Activated CD4-positive, alpha-beta T cell treated with anti-CD3 and anti-CD28 coated beads, Interleukin-2, amount 10 ng/mL, durations not matched to agents 24 days and 14 days (primary cell): ENCODE measurements at regions of chr18 and their contacts with region 1.

Region 1: GRCh38 chr18:59899298-59900221 is at the start of gene PMAIP1:
- DNase-seq: peak; percentile 96
- H3K4me3 Mint-ChIP-seq: peak within 1 kb of the TSS; percentile 95
- H3K27ac Mint-ChIP-seq: peak within 1 kb of the TSS; percentile 99
- H3K4me1 Mint-ChIP-seq: peaks cover 35% of the 10 kb centered on the region
- H3K27me3 Mint-ChIP-seq: no peaks in the 10 kb centered on the region
- total RNA-seq, gene PMAIP1: 52.5 and 54.6 TPM in 2 replicates

Region 2: GRCh38 chr18:58615140-58616132 is 1284.1 kb before region 1 on chr18:
- intact Hi-C with region 1: loop called (anchors 10 kb)
- DNase-seq: peak; percentile 89
- H3K4me3 Mint-ChIP-seq: peak overlapping the region; percentile 68
- H3K27ac Mint-ChIP-seq: peak overlapping the region; percentile 94
- H3K4me1 Mint-ChIP-seq: peaks cover 24% of the 10 kb centered on the region
- H3K27me3 Mint-ChIP-seq: peaks cover 21% of the 10 kb centered on the region

Region 3: DNA sequence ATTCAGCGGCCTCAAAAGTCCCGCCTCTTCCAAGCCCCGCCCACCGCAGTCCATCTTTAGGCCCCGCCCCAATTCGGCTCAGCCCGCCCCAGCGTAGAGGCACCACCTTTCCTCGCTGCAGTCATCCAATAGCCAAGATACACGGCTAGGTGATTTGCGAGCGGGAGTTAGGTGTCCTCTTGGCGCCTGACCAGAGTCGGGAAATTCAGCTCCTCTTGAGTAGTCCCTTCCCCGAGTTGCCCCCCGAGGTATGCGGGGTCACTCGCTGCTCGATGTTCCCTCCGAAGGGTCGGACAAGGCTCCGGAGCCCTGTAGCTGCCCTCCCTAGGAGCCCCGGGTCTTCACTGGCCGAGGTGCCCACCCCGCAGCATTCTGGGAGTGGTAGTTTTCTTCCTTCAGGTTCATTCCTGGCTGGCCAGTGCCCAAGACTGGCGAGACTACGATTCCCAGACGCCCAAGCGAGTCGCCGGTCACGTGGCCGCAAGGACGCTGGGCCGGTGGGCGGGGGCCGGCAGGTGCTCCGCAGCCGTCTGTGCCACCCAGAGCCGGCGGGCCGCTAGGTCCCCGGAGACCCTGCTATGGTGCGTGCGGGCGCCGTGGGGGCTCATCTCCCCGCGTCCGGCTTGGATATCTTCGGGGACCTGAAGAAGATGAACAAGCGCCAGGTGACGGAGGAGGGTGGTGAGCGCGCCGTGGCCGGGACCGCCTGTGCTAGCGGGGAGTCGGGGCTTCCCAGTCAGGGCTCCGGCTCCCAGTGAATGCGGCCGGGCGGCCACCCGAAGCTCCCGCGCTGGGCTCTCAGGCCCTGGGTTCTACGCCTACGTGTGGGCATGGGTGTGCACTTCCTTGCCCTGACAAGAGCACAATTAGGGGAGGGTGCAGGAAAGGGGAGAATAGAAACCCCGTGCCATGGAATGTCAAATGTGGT is 759.9 kb before region 1 on chr18 and contains the start of gene SEC11C:
- intact Hi-C with region 1: loop called (anchors 5 kb)
- DNase-seq: peak; percentile 99
- H3K4me3 Mint-ChIP-seq: peak within 1 kb of the TSS; percentile 97
- H3K27ac Mint-ChIP-seq: peak within 1 kb of the TSS; percentile 98
- H3K4me1 Mint-ChIP-seq: peaks cover 37% of the 10 kb centered on the region
- H3K27me3 Mint-ChIP-seq: peaks cover 27% of the 10 kb centered on the region
- total RNA-seq, gene SEC11C: 125 and 126 TPM in 2 replicates

Region 4: GRCh38 chr18:59446012-59446411 is 453.5 kb before region 1 on chr18:
- intact Hi-C with region 1: no loop called
- DNase-seq: no peak
- H3K4me3 Mint-ChIP-seq: no peak overlapping the region
- H3K27ac Mint-ChIP-seq: no peak overlapping the region
- H3K4me1 Mint-ChIP-seq: no peaks in the 10 kb centered on the region
- H3K27me3 Mint-ChIP-seq: no peaks in the 10 kb centered on the region

Region 5: DNA sequence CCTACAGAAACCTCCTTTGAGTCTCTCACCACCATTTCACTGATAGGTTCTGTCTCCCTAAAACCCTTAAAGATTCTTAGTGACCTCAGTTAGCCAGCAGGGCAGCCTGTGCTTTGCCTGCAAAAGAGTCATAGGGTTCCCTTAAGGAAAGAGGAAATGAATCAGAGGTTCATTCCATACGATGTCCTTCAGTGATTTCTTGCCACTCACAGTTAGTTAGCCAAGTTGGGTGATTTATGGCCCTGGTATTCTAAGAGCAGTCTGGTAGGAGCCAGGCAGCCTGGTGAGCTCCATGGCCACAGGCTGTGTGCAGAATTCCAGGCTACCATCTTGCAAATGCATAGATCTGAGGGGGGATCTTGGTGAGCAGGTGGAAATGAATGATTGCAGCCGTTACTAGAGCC is 183.6 kb before region 1 on chr18:
- intact Hi-C with region 1: no loop called
- DNase-seq: no peak
- H3K4me3 Mint-ChIP-seq: no peak overlapping the region
- H3K27ac Mint-ChIP-seq: no peak overlapping the region
- H3K4me1 Mint-ChIP-seq: no peaks in the 10 kb centered on the region
- H3K27me3 Mint-ChIP-seq: no peaks in the 10 kb centered on the region

Region 6: GRCh38 chr18:59837586-59837985 is 62.0 kb before region 1 on chr18:
- intact Hi-C with region 1: loop called (anchors 2 kb)
- DNase-seq: peak; percentile 84
- H3K4me3 Mint-ChIP-seq: no peak overlapping the region
- H3K27ac Mint-ChIP-seq: no peak overlapping the region
- H3K4me1 Mint-ChIP-seq: peaks cover 6% of the 10 kb centered on the region
- H3K27me3 Mint-ChIP-seq: peaks cover 16% of the 10 kb centered on the region

Region 7: DNA sequence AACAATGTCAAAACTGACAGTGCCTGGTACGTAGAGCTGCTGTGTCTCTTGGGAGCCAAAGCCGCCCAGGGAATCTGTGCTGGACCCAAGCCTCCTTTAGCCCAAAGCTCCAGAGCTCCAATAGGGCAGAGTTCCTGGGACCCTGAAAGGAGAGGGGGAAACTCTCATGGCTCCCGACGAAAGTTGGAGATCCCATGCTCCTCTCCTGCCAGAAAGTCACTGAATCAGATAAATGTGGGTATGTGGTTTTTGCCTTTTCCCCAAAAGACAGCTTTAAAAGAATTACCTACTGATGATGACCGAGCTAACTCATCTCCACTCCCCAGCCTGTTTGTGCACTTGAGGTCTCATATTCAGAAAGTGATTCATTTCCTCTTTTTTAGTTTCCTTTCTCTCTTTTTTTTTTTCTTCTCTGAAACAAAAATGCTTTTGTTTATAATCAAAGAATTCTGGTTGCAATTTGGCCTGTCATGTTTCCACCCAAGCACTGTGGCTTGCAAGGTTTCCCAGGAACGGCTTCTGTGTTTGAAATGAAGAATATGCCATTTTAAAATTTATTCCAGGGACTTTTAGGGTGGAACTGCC is 13.9 kb before region 1 on chr18:
- intact Hi-C with region 1: loop called (anchors 1 kb)
- DNase-seq: peak; percentile 80
- H3K4me3 Mint-ChIP-seq: peak overlapping the region; percentile 61
- H3K27ac Mint-ChIP-seq: peak overlapping the region; percentile 67
- H3K4me1 Mint-ChIP-seq: peaks cover 51% of the 10 kb centered on the region
- H3K27me3 Mint-ChIP-seq: no peaks in the 10 kb centered on the region

Region 8: GRCh38 chr18:59927246-59927825 is 27.8 kb after region 1 on chr18:
- intact Hi-C with region 1: loop called (anchors 1 kb)
- DNase-seq: peak; percentile 68
- H3K4me3 Mint-ChIP-seq: peak overlapping the region; percentile 14
- H3K27ac Mint-ChIP-seq: peak overlapping the region; percentile 78
- H3K4me1 Mint-ChIP-seq: peaks cover 29% of the 10 kb centered on the region
- H3K27me3 Mint-ChIP-seq: no peaks in the 10 kb centered on the region